Left colon (tissue), 2 donors: ENCODE measurements at regions of chr5 and their contacts with region 1.

Region 1: DNA sequence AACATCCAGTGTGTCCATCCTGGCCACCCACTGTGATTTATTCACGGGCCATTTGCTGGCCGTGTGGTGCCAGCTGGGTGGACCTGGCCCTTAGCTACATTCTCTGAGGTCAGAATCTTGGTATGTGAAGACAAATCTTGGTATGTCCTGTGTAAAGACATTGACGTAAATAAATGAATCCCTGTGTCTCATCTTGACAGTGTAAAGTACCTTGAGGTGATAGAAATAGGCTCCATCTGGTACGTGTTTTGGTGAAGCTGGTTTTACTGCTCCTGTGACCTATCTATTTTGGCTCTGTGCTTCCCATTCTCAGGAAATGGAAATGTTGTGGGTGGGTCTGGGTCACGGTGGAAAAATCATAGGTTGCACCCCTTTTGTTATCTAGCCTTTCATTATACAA is 245.4 kb upstream of the ANKH start:
- DNase-seq: no peak
- ATAC-seq: no peak

Region 2: DNA sequence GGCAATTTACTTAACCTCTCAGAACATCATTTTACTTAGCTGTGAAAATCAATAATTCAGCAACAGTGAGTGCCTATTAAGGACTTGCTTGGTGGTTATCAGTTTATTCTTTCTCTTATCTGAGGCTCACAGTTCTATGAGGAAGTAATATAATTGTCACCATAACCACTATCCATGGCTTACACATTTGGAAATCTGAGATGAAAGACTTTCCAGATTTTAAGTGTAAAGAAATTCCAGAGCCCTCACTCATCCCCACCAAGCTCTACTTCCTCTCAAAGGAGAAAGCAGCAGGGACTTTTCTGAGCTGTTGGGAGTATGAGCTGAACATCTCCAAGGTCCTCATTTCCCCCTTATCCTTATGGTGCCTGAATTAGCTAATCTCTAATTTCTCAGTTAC is 704.5 kb after region 1 on chr5:
- intact Hi-C with region 1: loop called in 1 of 2 experiments (anchors 10 kb)
- DNase-seq: no peak
- ATAC-seq: no peak